ENCODE measurements at regions of chr14 and their contacts with region 1.

Region 1: DNA sequence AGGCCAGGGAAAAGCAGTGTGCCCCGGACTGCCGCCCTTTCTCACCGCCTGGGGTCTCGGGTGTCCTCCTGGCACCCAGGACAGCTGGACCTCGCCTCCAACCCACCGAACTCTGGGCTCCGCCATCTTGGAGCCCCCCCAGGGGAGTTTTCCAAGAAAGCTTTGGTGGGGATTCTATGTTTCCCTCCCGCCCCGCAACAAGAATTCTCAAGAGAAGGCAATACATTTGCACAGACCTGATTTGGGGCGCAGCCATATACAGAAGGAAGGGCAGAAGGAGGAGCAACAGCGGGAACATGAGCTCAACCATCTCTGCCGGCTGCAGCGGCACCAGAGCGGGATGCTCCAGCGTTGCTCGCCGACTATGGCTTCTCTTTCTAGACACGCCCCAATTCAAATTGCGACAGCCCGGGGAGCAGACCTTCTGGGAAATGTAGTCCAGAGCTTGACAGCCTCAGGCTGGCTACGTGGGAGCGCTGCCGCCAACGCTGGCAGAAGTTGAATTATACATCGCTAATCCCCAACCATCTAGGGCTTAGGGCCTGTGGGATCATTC is at the start of gene RDH11:
- DNase-seq: peak; percentile 51 to 93 (median 82)
- ATAC-seq: peak; percentile 95
- H3K4me3 ChIP-seq: peak within 1 kb of the TSS; percentile 78 to 86
- H3K4me3 Mint-ChIP-seq: peak within 1 kb of the TSS; percentile 88
- H3K27ac ChIP-seq: peak within 1 kb of the TSS; percentile 52 to 87
- H3K27ac Mint-ChIP-seq: peak within 1 kb of the TSS; percentile 92
- H3K4me1 ChIP-seq: peaks cover 11% of the 10 kb centered on the region
- H3K4me1 Mint-ChIP-seq: peaks cover 23% of the 10 kb centered on the region
- H3K27me3 ChIP-seq: no peaks in the 10 kb centered on the region
- H3K27me3 Mint-ChIP-seq: no peaks in the 10 kb centered on the region
- CTCF ChIP-seq: no peak
- total RNA-seq, gene RDH11: 13.9 to 14.5 TPM

Region 2: DNA sequence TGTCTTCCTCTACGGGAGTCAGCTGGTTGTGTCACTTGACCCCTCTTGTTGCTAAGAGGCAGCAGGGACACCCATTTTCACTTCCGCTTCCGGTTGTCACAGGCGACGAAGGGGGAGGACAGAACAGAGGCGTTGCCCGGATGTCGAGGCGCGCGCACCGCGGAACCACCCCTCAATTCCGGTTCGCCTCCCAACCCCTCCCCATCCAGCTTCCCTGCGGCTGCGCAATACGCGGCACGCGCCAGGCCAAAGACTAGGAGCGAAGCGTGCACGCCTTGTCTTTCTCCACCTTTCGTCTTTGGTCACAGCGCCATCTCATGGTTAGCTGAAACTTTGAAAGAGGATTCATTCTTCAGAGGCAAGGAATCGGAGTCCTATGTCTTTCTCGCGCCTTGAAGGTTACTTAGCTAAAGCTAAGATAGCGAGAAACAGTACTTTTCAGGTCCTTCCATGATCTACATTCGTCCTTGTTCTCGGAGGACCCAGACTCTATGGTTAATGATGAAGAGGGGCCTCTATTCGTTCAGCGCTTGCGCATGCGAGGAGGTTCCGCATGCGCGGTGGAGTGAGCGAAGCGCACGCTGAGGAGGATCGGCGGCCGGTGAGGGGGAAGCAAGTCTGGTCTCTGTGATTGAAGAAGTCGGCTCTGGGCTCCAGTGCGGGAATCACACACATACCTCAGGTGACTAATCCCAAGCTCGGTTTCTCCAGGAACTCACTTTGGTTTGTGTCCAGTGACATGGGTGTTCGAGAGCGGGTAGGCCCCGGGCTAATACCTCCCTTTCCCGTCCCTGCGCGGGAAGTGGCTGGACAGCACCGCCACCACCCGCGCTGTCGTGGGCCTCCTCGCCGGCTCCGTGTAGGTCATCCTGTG is 335.5 kb before region 1 on chr14 and contains the starts of genes ATP6V1D and EIF2S1:
- CTCF ChIA-PET with region 1: interaction called, 4 read pairs
- POLR2A ChIA-PET with region 1: interaction called, 6 read pairs
- intact Hi-C with region 1: loop called in 1 of 2 experiments (anchors 1 kb)
- DNase-seq: peak; percentile 99 to 100 (median 99)
- ATAC-seq: peak; percentile 93
- H3K4me3 ChIP-seq: peak within 1 kb of the TSS; percentile 79 to 87
- H3K4me3 Mint-ChIP-seq: peak within 1 kb of the TSS; percentile 99
- H3K27ac ChIP-seq: peak within 1 kb of the TSS; percentile 83 to 93
- H3K27ac Mint-ChIP-seq: peak within 1 kb of the TSS; percentile 97
- H3K4me1 ChIP-seq: peaks cover 29% of the 10 kb centered on the region
- H3K4me1 Mint-ChIP-seq: peaks cover 80% of the 10 kb centered on the region
- H3K27me3 ChIP-seq: no peaks in the 10 kb centered on the region
- H3K27me3 Mint-ChIP-seq: no peaks in the 10 kb centered on the region
- CTCF ChIP-seq: peak; percentile 99
- total RNA-seq, gene ATP6V1D: 30.1 to 34.2 TPM
- total RNA-seq, gene EIF2S1: 29.4 to 34.4 TPM

Region 3: DNA sequence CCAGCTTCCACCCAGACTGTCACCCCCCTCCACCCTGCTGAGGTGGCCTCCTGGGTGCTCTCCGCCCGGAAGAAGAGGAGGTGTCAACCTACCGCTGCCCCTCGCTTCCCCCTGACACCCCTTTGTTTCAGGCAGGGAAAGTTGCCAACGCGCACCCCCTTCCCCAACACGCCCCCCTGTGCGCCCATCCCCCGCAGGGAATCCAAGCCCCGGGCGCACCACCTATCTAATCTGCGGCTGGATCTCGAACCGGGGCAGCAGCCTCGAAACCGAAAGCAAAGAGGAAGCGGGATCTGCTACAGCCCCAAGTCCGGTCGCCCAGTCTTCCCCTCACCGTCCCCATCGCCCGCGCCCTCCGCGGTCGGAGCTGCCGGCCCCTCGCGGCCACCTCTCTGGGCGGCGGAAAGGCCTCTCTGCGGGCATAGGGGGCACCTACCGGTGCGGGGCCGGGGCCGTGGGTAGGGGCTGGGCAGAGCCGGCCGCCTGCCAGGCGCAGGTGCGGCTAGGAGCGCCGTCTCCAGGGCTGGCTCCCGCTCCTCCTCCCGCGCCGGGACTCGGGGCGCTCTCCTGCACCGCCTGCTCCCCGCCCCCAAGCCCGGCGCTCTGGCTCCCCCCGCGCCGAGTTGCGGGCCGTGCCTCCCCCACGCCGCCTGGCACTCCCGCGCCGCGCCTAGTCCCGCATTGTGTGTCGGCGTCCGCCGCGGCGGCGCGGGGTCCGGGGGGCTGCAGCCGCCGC is 180.7 kb before region 1 on chr14:
- CTCF ChIA-PET with region 1: interaction called, 3 read pairs
- POLR2A ChIA-PET with region 1: no interaction called
- intact Hi-C with region 1: loop called in 1 of 2 experiments (anchors 10 kb)
- DNase-seq: peak in 8 of 9 experiments; percentile 11 to 75 (median 43)
- ATAC-seq: peak; percentile 71
- H3K4me3 ChIP-seq: peak overlapping the region; percentile 71 to 75
- H3K4me3 Mint-ChIP-seq: peak overlapping the region; percentile 91
- H3K27ac ChIP-seq: peak overlapping the region; percentile 62 to 79
- H3K27ac Mint-ChIP-seq: peak overlapping the region; percentile 89
- H3K4me1 ChIP-seq: peaks cover 16% of the 10 kb centered on the region
- H3K4me1 Mint-ChIP-seq: peaks cover 36% of the 10 kb centered on the region
- H3K27me3 ChIP-seq: no peaks in the 10 kb centered on the region
- H3K27me3 Mint-ChIP-seq: no peaks in the 10 kb centered on the region
- CTCF ChIP-seq: no peak

Region 4: DNA sequence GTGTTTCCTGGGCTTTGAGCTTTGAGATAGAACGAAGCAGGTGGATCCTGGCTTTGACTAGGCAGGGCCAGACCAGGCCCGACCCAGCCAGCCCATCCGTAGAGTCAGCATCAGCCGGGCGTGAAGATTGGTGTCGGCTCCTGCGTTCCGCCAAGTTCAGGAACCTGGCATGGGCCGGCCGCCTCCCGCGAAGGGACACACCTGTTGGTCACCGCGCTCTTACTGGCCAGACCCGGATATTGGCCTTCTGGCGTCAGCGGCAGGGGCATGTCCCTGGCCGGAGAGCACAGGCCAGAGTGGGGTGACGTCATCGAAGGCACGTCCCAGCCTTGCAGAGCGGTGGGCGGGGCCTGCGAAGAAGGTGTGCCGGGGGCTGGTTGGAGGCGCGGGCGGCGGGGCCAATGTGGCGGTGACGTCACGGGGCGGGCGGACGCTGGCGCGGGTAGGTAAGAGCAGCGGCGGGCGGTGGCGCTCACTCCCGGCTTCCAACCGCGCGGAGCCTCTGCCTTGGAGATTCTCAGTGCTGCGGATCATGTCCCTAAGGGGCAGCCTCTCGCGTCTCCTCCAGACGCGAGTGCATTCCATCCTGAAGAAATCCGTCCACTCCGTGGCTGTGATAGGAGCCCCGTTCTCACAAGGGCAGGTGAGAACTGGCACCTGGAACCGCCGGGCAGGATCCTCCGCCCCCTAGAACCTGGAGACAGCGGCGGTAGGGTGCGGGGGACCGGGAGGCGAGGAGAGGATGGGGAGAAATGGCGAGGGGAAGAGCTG is 75.8 kb before region 1 on chr14 and contains the start of gene ARG2:
- CTCF ChIA-PET with region 1: interaction called, 104 read pairs
- POLR2A ChIA-PET with region 1: interaction called, 4 read pairs
- intact Hi-C with region 1: loop called (anchors 2 kb)
- DNase-seq: peak; percentile 92 to 99 (median 97)
- ATAC-seq: peak; percentile 89
- H3K4me3 ChIP-seq: peak within 1 kb of the TSS; percentile 73 to 90
- H3K4me3 Mint-ChIP-seq: peak within 1 kb of the TSS; percentile 88
- H3K27ac ChIP-seq: peak within 1 kb of the TSS; percentile 78 to 86
- H3K27ac Mint-ChIP-seq: peak within 1 kb of the TSS; percentile 86
- H3K4me1 ChIP-seq: peaks cover 17% of the 10 kb centered on the region
- H3K4me1 Mint-ChIP-seq: peaks cover 32% of the 10 kb centered on the region
- H3K27me3 ChIP-seq: no peaks in the 10 kb centered on the region
- H3K27me3 Mint-ChIP-seq: peaks cover 2% of the 10 kb centered on the region
- CTCF ChIP-seq: no peak
- total RNA-seq, gene ARG2: 1.5 to 3.7 TPM